Aorta (tissue), 5 donors: ENCODE measurements at regions of chr3 and their contacts with region 1.

Region 1: GRCh38 chr3:185937689-185938463 is at the start of gene TRA2B:
- DNase-seq: peak; percentile 99 to 100
- ATAC-seq: peak; percentile 99
- H3K4me3 ChIP-seq: peak within 1 kb of the TSS; percentile 73 to 85
- H3K27ac ChIP-seq: peak within 1 kb of the TSS; percentile 94 to 96
- H3K4me1 ChIP-seq: no peaks in the 10 kb centered on the region
- H3K27me3 ChIP-seq: no peaks in the 10 kb centered on the region
- total RNA-seq, gene TRA2B: 104 to 150 TPM

Region 2: DNA sequence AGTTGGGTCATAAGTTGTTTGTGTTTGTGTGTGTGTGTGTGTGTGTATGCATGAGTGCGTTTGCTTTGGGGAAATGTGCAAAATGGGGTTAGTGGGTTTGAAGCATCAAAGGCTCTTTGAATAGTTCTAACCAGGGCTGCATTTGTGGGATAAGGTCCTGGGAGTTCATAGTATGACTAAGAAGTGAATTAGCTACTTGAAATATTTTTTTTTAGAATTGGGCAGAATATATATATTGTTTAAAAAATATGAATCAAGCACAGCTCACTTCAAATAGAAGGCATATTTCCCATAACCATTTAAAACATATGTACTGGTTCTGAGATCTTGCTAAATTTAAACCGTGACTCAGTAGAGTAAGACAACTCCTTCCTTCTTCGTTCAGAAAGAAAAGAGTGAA is 156.1 kb before region 1 on chr3:
- intact Hi-C with region 1: no loop called
- DNase-seq: no peak
- ATAC-seq: no peak
- H3K4me3 ChIP-seq: no peak overlapping the region
- H3K27ac ChIP-seq: no peak overlapping the region
- H3K4me1 ChIP-seq: no peaks in the 10 kb centered on the region
- H3K27me3 ChIP-seq: no peaks in the 10 kb centered on the region

Region 3: GRCh38 chr3:186108941-186109865 is 171.3 kb after region 1 on chr3 and contains the start of gene ETV5:
- intact Hi-C with region 1: loop called in 1 of 2 experiments (anchors 1 kb)
- DNase-seq: peak; percentile 99 to 100
- ATAC-seq: peak; percentile 97
- H3K4me3 ChIP-seq: peak within 1 kb of the TSS; percentile 75 to 87
- H3K27ac ChIP-seq: peak within 1 kb of the TSS; percentile 79 to 87
- H3K4me1 ChIP-seq: no peaks in the 10 kb centered on the region
- H3K27me3 ChIP-seq: no peaks in the 10 kb centered on the region
- total RNA-seq, gene ETV5: 25.5 to 34.0 TPM

Region 4: GRCh38 chr3:186946756-186947375 is 1009.0 kb after region 1 on chr3:
- intact Hi-C with region 1: loop called in 1 of 2 experiments (anchors 10 kb)
- DNase-seq: no peak
- ATAC-seq: no peak
- H3K4me3 ChIP-seq: no peak overlapping the region
- H3K27ac ChIP-seq: no peak overlapping the region
- H3K4me1 ChIP-seq: no peaks in the 10 kb centered on the region
- H3K27me3 ChIP-seq: no peaks in the 10 kb centered on the region